CD4-positive, alpha-beta T cell (primary cell): ENCODE measurements at regions of chr12 and their contacts with region 1.

Region 1: DNA sequence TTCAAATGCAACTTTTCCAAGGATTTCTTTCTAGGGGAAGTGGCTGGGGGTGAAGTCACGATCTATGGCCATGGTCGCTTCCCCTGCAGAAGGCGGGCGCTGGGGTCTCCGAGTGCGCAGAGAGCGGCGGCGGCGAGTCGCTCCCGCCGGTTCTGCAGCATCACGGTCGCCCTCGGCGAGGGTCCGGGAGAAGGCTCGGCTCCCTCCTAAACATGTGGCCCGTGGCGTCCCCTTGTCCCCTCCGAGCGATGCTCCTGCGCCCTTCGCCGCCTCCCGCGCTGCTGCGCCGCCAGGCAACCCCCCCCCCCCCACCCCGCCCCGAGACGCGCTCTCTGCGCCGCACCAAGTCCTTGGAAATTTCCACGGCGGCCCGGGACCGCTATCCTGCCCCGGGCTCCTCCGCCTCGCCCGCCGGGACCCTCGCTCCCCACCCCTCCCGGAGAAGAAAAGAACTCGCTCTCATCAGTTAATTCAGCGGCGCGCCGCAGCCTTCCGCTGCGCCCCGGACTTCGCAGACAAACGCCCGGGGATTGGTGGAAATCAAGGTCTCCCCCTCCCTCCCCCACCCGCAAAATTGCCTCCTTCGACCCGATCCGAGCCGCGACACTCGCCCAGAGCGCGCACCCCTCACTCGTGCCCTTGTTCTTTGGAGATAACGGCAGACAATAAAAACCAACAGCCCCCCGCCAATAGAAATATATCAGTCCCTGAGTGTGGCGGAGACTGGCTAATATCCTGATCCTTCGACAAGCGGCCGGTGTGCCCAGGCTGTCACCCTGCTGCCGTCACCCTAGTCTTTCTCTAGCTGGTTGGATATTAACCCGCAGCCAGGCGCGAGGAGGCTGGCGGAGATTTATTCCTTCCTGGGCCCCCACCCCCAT is at the start of gene ST8SIA1:
- DNase-seq: peak; percentile 50 to 88 (median 60)
- ATAC-seq: peak; percentile 53
- H3K4me3 ChIP-seq: peak within 1 kb of the TSS; percentile 86
- H3K4me3 Mint-ChIP-seq: peak within 1 kb of the TSS; percentile 95
- H3K27ac ChIP-seq: peak within 1 kb of the TSS; percentile 45 to 74
- H3K27ac Mint-ChIP-seq: peak within 1 kb of the TSS; percentile 92
- H3K4me1 ChIP-seq: peaks cover 25% of the 10 kb centered on the region
- H3K4me1 Mint-ChIP-seq: peaks cover 52% of the 10 kb centered on the region
- H3K27me3 ChIP-seq: peaks cover 0 to 8% of the 10 kb centered on the region in 2 experiments
- H3K27me3 Mint-ChIP-seq: peaks cover 39% of the 10 kb centered on the region
- CTCF ChIP-seq: no peak
- total RNA-seq, gene ST8SIA1: 5.6 to 5.7 TPM

Region 2: DNA sequence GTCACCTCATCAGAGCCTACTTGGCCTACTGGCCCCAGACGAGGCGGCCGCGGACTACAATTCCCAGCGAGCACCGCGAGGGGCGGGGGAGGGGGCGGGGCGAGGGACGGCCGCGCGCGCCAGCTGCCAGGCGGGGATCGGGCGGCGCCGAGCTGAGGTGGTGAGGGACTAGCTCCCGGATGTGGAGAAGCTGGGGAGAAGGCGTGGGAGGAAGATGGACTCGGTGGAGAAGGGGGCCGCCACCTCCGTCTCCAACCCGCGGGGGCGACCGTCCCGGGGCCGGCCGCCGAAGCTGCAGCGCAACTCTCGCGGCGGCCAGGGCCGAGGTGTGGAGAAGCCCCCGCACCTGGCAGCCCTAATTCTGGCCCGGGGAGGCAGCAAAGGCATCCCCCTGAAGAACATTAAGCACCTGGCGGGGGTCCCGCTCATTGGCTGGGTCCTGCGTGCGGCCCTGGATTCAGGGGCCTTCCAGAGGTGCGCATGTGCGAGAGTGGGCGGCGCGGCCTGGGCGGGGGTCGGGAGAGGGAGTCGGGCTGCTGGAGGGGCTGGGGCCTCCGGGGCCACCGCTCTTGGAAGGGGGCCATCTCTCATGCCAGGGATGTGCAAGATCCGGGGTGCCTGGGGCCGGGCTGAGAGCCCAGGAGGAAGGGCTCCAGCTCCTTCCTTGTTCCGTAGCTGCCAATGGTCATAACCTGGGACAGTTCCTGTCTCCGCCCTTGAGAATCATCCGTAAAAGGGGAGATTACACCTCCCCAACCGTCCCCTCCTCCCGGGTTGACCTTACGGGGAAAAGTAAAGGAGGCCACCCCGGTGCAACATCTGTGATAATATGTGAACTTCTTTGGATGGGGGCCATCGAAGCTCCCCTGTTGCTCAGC is 288.3 kb before region 1 on chr12 and contains the start of gene CMAS:
- CTCF ChIA-PET with region 1: interaction called, 3 read pairs
- POLR2A ChIA-PET with region 1: interaction called, 11 read pairs
- intact Hi-C with region 1: no loop called
- DNase-seq: peak; percentile 62 to 89 (median 77)
- ATAC-seq: peak; percentile 89
- H3K4me3 ChIP-seq: peak within 1 kb of the TSS; percentile 85
- H3K4me3 Mint-ChIP-seq: peak within 1 kb of the TSS; percentile 97
- H3K27ac ChIP-seq: peak within 1 kb of the TSS; percentile 29 to 43
- H3K27ac Mint-ChIP-seq: peak within 1 kb of the TSS; percentile 89
- H3K4me1 ChIP-seq: peaks cover 7% of the 10 kb centered on the region
- H3K4me1 Mint-ChIP-seq: peaks cover 54% of the 10 kb centered on the region
- H3K27me3 ChIP-seq: no peaks in the 10 kb centered on the region
- H3K27me3 Mint-ChIP-seq: no peaks in the 10 kb centered on the region
- CTCF ChIP-seq: no peak
- total RNA-seq, gene CMAS: 5.5 to 7.0 TPM

Region 3: GRCh38 chr12:22088886-22089285 is 245.8 kb before region 1 on chr12:
- CTCF ChIA-PET with region 1: no interaction called
- POLR2A ChIA-PET with region 1: interaction called, 3 read pairs
- intact Hi-C with region 1: loop called in 1 of 2 experiments (anchors 5 kb)
- DNase-seq: no peak
- ATAC-seq: no peak
- H3K4me3 ChIP-seq: no peak overlapping the region
- H3K4me3 Mint-ChIP-seq: no peak overlapping the region
- H3K27ac ChIP-seq: no peak overlapping the region
- H3K27ac Mint-ChIP-seq: no peak overlapping the region
- H3K4me1 ChIP-seq: no peaks in the 10 kb centered on the region
- H3K4me1 Mint-ChIP-seq: no peaks in the 10 kb centered on the region
- H3K27me3 ChIP-seq: no peaks in the 10 kb centered on the region
- H3K27me3 Mint-ChIP-seq: no peaks in the 10 kb centered on the region
- CTCF ChIP-seq: no peak

Region 4: DNA sequence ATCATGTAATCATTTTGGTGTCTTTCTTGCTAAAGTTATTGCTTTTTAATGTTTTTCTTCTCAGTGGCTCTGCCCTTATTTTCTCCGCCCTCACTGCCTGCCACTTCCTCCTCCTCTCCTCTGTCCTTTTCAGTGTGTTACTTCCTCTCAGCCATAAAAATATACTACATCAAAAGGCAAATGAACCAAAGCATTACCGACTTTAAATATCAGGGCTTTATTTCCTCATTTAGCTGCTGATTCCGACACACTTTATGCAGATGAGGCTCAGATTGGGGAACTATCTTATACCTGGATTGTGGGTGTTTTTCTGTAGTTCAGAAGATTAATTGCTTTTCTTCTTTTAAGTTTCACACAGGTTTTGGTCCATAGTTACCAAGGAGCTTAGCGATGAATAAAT is 170.5 kb before region 1 on chr12:
- CTCF ChIA-PET with region 1: no interaction called
- POLR2A ChIA-PET with region 1: interaction called, 4 read pairs
- intact Hi-C with region 1: loop called in 1 of 2 experiments (anchors 10 kb)
- DNase-seq: peak in 4 of 14 experiments; percentile 30 to 71 (median 46)
- ATAC-seq: peak; percentile 66
- H3K4me3 ChIP-seq: peak overlapping the region; percentile 6
- H3K4me3 Mint-ChIP-seq: peak overlapping the region; percentile 57
- H3K27ac ChIP-seq: peak overlapping the region; percentile 5 to 57
- H3K27ac Mint-ChIP-seq: peak overlapping the region; percentile 78
- H3K4me1 ChIP-seq: peaks cover 23% of the 10 kb centered on the region
- H3K4me1 Mint-ChIP-seq: peaks cover 64% of the 10 kb centered on the region
- H3K27me3 ChIP-seq: no peaks in the 10 kb centered on the region
- H3K27me3 Mint-ChIP-seq: no peaks in the 10 kb centered on the region
- CTCF ChIP-seq: no peak

Region 5: GRCh38 chr12:22409377-22410164 is 74.9 kb after region 1 on chr12:
- CTCF ChIA-PET with region 1: interaction called, 7 read pairs
- POLR2A ChIA-PET with region 1: interaction called, 18 read pairs
- intact Hi-C with region 1: no loop called
- DNase-seq: peak in 12 of 14 experiments; percentile 16 to 88 (median 26)
- ATAC-seq: peak; percentile 80
- H3K4me3 ChIP-seq: peak overlapping the region; percentile 38
- H3K4me3 Mint-ChIP-seq: peak overlapping the region; percentile 78
- H3K27ac ChIP-seq: peak overlapping the region; percentile 29 to 49
- H3K27ac Mint-ChIP-seq: peak overlapping the region; percentile 88
- H3K4me1 ChIP-seq: peaks cover 17% of the 10 kb centered on the region
- H3K4me1 Mint-ChIP-seq: peaks cover 20% of the 10 kb centered on the region
- H3K27me3 ChIP-seq: no peaks in the 10 kb centered on the region
- H3K27me3 Mint-ChIP-seq: no peaks in the 10 kb centered on the region
- CTCF ChIP-seq: no peak

Region 6: DNA sequence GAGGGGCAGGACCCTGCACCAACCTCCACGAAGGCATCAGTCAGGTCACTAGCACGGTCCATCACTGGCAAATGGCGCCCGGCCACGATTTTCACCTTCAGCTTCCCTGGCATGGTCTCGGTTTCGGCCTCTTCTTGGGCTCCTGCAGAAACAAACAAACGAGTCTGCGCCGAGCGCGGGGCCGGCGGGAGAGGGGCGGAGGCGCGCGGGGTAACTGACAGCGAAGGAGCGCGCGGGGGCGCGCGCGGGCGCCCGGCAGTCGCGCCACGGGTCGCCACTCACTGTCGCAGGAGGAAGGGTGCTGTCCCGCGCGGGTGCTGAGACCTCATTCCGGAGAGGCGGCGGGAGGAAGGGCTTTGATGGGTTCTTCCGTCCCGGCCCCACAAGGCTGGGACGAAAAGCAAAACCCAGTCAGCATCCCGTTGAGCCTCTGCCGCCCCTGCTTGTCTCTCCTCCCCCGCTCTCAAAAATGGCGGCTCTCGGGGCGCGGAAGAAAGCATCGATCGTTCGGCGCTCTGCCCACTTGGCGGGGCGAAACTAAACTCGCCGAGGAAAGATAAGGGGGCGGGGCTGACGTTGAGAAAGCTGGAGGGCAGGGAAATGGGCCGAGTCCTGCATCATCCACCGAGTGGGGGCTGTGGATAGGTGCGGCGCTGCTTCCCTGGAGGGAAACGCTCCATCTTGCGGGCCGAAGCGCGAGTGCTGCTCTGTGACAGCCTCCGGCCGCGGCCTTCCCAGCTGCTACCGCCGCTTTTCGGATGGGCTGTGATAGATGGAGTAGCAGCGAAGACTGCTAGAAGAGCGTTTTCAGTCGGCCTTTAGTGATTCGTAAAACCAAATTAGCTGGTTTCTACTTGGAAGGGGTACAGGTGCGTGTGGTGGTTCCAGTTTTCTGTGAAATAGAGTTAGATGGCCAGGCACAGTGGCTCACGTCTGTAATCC is 209.7 kb after region 1 on chr12 and contains the start of gene C2CD5:
- CTCF ChIA-PET with region 1: no interaction called
- POLR2A ChIA-PET with region 1: interaction called, 6 read pairs
- intact Hi-C with region 1: loop called in 1 of 2 experiments (anchors 5 kb)
- DNase-seq: peak; percentile 90 to 98 (median 94)
- ATAC-seq: peak; percentile 89
- H3K4me3 ChIP-seq: peak within 1 kb of the TSS; percentile 82
- H3K4me3 Mint-ChIP-seq: peak within 1 kb of the TSS; percentile 95
- H3K27ac ChIP-seq: peak within 1 kb of the TSS; percentile 81 to 88
- H3K27ac Mint-ChIP-seq: peak within 1 kb of the TSS; percentile 97
- H3K4me1 ChIP-seq: peaks cover 31% of the 10 kb centered on the region
- H3K4me1 Mint-ChIP-seq: peaks cover 44% of the 10 kb centered on the region
- H3K27me3 ChIP-seq: no peaks in the 10 kb centered on the region
- H3K27me3 Mint-ChIP-seq: peaks cover 6% of the 10 kb centered on the region
- CTCF ChIP-seq: peak; percentile 37
- total RNA-seq, gene C2CD5: 21.8 to 23.2 TPM